ENCODE measurements at regions of chr16 and their contacts with region 1.

Region 1: DNA sequence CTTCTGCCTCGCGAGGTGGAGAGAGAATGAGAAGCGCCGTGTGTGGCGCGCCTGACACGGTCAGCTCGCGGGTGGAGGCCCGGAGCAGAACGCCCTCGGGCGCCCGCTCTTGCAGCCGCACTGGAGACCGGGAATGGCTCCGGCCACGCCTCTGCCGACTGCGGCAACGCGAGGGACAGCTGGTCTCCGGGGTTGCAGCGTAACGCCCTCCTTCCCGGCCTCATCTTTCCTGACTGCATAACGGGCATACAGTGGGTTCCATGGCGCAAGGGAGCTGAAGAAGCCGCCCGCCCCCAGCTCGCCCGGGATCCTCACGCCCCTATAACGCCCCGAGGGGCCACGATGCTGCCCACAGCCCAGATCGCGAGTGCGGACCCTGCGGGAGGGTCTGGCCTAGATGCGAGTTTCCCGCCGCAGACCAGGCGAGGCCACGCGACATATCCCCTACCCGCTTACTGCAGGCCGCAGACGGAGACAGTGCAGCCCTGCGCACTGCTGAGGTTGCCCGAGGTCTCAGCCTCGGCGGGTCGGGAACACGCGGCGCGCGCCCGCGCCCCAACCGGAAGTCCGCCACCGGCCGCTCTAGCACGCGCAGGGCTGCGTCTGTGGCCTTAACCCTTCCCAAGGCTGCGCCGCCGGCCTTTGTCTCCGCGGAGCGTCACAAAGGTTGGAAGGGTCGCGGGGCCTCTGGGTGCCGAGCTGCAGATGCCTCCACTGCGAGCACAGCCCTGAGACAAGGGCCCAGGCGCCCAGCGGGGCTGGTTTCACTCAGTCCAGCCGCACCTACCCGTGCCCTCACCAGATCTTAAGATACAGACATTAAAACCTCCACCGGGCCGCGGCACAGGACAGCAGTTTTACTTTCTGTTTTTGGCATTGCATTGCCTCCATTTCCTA is 18.8 kb downstream of the BCL7C start:
- DNase-seq: peak; percentile 91
- ATAC-seq: peak; percentile 93
- H3K4me3 ChIP-seq: peak overlapping the region; percentile 84 to 97 (median 86)
- H3K27ac ChIP-seq: peak overlapping the region; percentile 86
- H3K4me1 ChIP-seq: peaks cover 35% of the 10 kb centered on the region
- H3K27me3 ChIP-seq: no peaks in the 10 kb centered on the region; a peak in 1 of 5 replicates
- CTCF ChIP-seq: peak; percentile 45
- EP300 ChIP-seq: peak; percentile 50 to 52; a peak in 2 of 4 replicates
- POLR2A ChIP-seq: peak; percentile 96 to 99
- RAD21 ChIP-seq: peak; percentile 80

Region 2: GRCh38 chr16:30677931-30678585 is 197.0 kb before region 1 on chr16:
- CTCF ChIA-PET with region 1: no interaction called
- POLR2A ChIA-PET with region 1: no interaction called
- in situ Hi-C with region 1: no loop called
- intact Hi-C with region 1: no loop called
- DNase-seq: peak; percentile 25
- ATAC-seq: peak; percentile 80
- H3K4me3 ChIP-seq: 0 out of 6 replicates have a peak overlapping the region, but pooled peaks of 1 of the 3 experiments have one; percentile 1
- H3K27ac ChIP-seq: no peak overlapping the region
- H3K4me1 ChIP-seq: peaks cover 18% of the 10 kb centered on the region
- H3K27me3 ChIP-seq: no peaks in the 10 kb centered on the region
- CTCF ChIP-seq: no peak
- EP300 ChIP-seq: no peak
- POLR2A ChIP-seq: no peak
- RAD21 ChIP-seq: no peak

Region 3: DNA sequence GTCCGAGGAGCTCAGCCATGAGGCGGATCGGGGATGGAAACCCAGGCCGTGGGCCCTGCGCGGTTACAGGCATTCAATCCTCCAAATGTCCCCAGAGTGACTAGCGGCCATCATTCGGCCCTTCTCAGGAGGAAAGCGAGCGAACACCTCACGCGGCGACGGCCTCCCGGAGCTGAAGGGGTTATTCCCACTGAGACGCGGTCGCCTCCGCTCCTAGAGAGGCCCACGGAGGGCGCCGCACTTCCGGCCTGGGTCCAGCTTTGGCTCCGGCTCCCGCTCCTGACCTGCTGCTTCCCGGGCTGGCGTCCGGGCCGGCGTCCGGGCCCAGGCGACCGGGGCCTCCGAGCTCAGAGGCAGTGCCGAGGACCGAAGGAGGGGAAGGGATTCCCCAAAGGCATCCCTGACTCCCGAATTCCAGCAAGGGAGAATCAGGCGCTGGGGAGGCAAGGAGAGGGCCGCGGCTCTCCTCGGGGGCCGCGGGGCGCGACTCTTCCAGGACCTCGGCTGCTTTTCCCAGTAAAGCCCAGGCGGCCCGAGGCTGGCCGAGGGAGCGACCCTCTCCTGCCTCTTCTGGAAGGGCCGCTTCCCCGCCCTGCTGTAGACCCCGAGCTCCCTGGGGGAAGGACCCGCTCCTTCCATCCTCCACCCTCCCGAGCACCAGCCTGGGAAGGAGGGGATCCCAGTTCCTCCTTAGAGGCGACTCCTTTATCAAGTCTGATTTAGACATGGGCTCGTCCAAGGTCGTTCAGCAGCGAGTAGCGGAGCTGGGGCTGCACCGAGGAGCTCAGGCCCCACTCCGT is 69.5 kb before region 1 on chr16:
- CTCF ChIA-PET with region 1: no interaction called
- POLR2A ChIA-PET with region 1: interaction called, 69 read pairs
- in situ Hi-C with region 1: no loop called
- intact Hi-C with region 1: no loop called
- DNase-seq: peak; percentile 78
- ATAC-seq: peak; percentile 88
- H3K4me3 ChIP-seq: peak overlapping the region; percentile 74 to 96 (median 89)
- H3K27ac ChIP-seq: peak overlapping the region; percentile 92
- H3K4me1 ChIP-seq: peaks cover 54% of the 10 kb centered on the region
- H3K27me3 ChIP-seq: no peaks in the 10 kb centered on the region; a peak in 1 of 5 replicates
- CTCF ChIP-seq: peak; percentile 65
- EP300 ChIP-seq: peak; percentile 68 to 78; a peak in 3 of 4 replicates
- POLR2A ChIP-seq: peak; percentile 91 to 93
- RAD21 ChIP-seq: peak; percentile 83; the same call in 1 of the 2 replicates

Region 4: GRCh38 chr16:30839523-30840227 is 35.4 kb before region 1 on chr16:
- CTCF ChIA-PET with region 1: interaction called, 3 read pairs
- POLR2A ChIA-PET with region 1: interaction called, 67 read pairs
- in situ Hi-C with region 1: no loop called
- intact Hi-C with region 1: loop called (anchors 2 kb)
- DNase-seq: no peak
- ATAC-seq: peak; percentile 5; the same call in 2 of the 3 replicates
- H3K4me3 ChIP-seq: peak overlapping the region in 1 of 3 experiments; percentile 21; a peak in 1 of 6 replicates
- H3K27ac ChIP-seq: peak overlapping the region; percentile 36
- H3K4me1 ChIP-seq: peaks cover 49% of the 10 kb centered on the region
- H3K27me3 ChIP-seq: no peaks in the 10 kb centered on the region
- CTCF ChIP-seq: no peak
- EP300 ChIP-seq: no peak
- POLR2A ChIP-seq: no peak
- RAD21 ChIP-seq: no peak

Region 5: GRCh38 chr16:30858111-30858495 is 17.0 kb before region 1 on chr16:
- CTCF ChIA-PET with region 1: no interaction called
- POLR2A ChIA-PET with region 1: interaction called, 10 read pairs
- in situ Hi-C with region 1: no loop called
- intact Hi-C with region 1: no loop called
- DNase-seq: no peak
- ATAC-seq: no peak
- H3K4me3 ChIP-seq: no peak overlapping the region
- H3K27ac ChIP-seq: no peak overlapping the region
- H3K4me1 ChIP-seq: peaks cover 24% of the 10 kb centered on the region
- H3K27me3 ChIP-seq: no peaks in the 10 kb centered on the region
- CTCF ChIP-seq: no peak
- EP300 ChIP-seq: no peak
- POLR2A ChIP-seq: no peak
- RAD21 ChIP-seq: no peak

Region 6: GRCh38 chr16:30902029-30902972 is 27.2 kb after region 1 on chr16:
- CTCF ChIA-PET with region 1: no interaction called
- POLR2A ChIA-PET with region 1: interaction called, 23 read pairs
- in situ Hi-C with region 1: no loop called
- intact Hi-C with region 1: loop called (anchors 2 kb)
- DNase-seq: peak; percentile 33
- ATAC-seq: peak; percentile 87
- H3K4me3 ChIP-seq: peak overlapping the region; percentile 58 to 77 (median 60)
- H3K27ac ChIP-seq: peak overlapping the region; percentile 65
- H3K4me1 ChIP-seq: peaks cover 75% of the 10 kb centered on the region
- H3K27me3 ChIP-seq: no peaks in the 10 kb centered on the region
- CTCF ChIP-seq: peak; percentile 28; the same call in 1 of the 2 replicates
- EP300 ChIP-seq: no peak; a peak in 1 of 4 replicates
- POLR2A ChIP-seq: peak; percentile 49 to 70; a peak in 3 of 4 replicates
- RAD21 ChIP-seq: peak; percentile 95

Region 7: GRCh38 chr16:31050280-31051030 is 175.4 kb after region 1 on chr16:
- CTCF ChIA-PET with region 1: no interaction called
- POLR2A ChIA-PET with region 1: no interaction called
- in situ Hi-C with region 1: no loop called
- intact Hi-C with region 1: no loop called
- DNase-seq: no peak
- ATAC-seq: peak; percentile 33
- H3K4me3 ChIP-seq: no peak overlapping the region
- H3K27ac ChIP-seq: no peak overlapping the region
- H3K4me1 ChIP-seq: peaks cover 23% of the 10 kb centered on the region
- H3K27me3 ChIP-seq: peaks cover 0 to 3% of the 10 kb centered on the region in 2 experiments; a peak in 1 of 5 replicates
- CTCF ChIP-seq: no peak
- EP300 ChIP-seq: no peak
- POLR2A ChIP-seq: no peak
- RAD21 ChIP-seq: no peak

Measured in HepG2 (cell line).